ENCODE measurements at regions of chr1 and their contacts with region 1.

Region 1: GRCh38 chr1:30379684-30380624 is 343.4 kb downstream of the MATN1 start:
- DNase-seq: peak; percentile 50
- H3K4me3 ChIP-seq: no peak overlapping the region
- H3K27ac ChIP-seq: no peak overlapping the region
- H3K4me1 ChIP-seq: no peaks in the 10 kb centered on the region
- H3K27me3 ChIP-seq: no peaks in the 10 kb centered on the region
- CTCF ChIP-seq: peak; percentile 73 to 76
- POLR2A ChIP-seq: no peak

Region 2: DNA sequence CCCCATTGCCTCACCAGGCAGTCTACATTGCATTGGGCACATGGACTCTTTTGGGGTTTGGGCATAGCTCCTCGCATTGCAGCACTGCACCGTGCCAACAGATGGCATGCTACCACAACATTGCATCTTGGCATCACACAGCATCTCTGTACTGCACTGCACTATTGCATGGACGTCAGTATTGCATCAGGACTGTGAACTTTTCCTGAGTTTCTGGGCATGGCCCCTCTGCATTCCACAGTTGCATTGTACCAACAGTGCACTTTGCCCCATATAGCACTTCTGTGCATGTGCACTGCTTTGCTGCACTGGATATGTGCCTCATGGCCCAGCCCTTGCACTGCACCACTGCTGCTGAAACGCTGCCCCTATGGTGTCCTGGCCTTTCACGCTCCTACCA is 1134.1 kb before region 1 on chr1:
- CTCF ChIA-PET with region 1: interaction called, 24 read pairs
- POLR2A ChIA-PET with region 1: no interaction called
- dilution Hi-C with region 1: no loop called
- intact Hi-C with region 1: no loop called
- DNase-seq: peak; percentile 11
- H3K4me3 ChIP-seq: no peak overlapping the region
- H3K27ac ChIP-seq: no peak overlapping the region
- H3K4me1 ChIP-seq: no peaks in the 10 kb centered on the region
- H3K27me3 ChIP-seq: peaks cover 0 to 1% of the 10 kb centered on the region in 2 experiments
- CTCF ChIP-seq: peak; percentile 21 to 48
- POLR2A ChIP-seq: no peak

Region 3: GRCh38 chr1:29341936-29342335 is 1038.0 kb before region 1 on chr1:
- CTCF ChIA-PET with region 1: interaction called, 17 read pairs
- POLR2A ChIA-PET with region 1: no interaction called
- dilution Hi-C with region 1: no loop called
- intact Hi-C with region 1: loop called (anchors 1 kb)
- DNase-seq: no peak
- H3K4me3 ChIP-seq: no peak overlapping the region
- H3K27ac ChIP-seq: no peak overlapping the region
- H3K4me1 ChIP-seq: no peaks in the 10 kb centered on the region
- H3K27me3 ChIP-seq: peaks cover 0 to 2% of the 10 kb centered on the region in 2 experiments
- CTCF ChIP-seq: no peak
- POLR2A ChIP-seq: no peak

Region 4: GRCh38 chr1:29703596-29704370 is 676.2 kb before region 1 on chr1:
- CTCF ChIA-PET with region 1: interaction called, 23 read pairs
- POLR2A ChIA-PET with region 1: no interaction called
- dilution Hi-C with region 1: no loop called
- intact Hi-C with region 1: no loop called
- DNase-seq: peak; percentile 39
- H3K4me3 ChIP-seq: no peak overlapping the region
- H3K27ac ChIP-seq: no peak overlapping the region
- H3K4me1 ChIP-seq: peaks cover 11% of the 10 kb centered on the region
- H3K27me3 ChIP-seq: peaks cover 10 to 16% of the 10 kb centered on the region in 2 experiments
- CTCF ChIP-seq: peak; percentile 68 to 75
- POLR2A ChIP-seq: no peak

Region 5: DNA sequence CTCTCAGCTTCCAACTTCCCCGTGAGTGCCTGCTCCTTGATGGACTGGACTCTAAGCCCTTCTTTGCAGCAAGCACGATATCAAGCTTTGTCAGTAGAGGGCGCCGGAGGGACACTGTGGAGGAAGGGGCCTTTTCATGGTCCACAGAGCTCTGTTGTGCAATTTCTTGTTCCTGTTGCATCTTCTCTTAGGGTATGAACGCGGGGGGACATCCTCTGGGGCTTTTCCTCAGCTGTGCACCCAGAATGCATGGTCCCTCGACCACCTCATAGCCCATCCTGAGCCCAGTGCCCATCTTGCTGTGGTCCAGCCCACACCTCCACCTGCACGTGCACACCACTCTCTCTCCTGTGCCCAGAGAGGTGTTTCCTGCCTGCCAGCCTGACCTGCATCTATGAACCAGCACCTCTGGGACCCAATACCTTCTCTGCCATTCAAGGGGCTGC is 586.8 kb before region 1 on chr1:
- CTCF ChIA-PET with region 1: interaction called, 109 read pairs
- POLR2A ChIA-PET with region 1: no interaction called
- dilution Hi-C with region 1: no loop called
- intact Hi-C with region 1: loop called (anchors 1 kb)
- DNase-seq: peak; percentile 72
- H3K4me3 ChIP-seq: no peak overlapping the region
- H3K27ac ChIP-seq: no peak overlapping the region
- H3K4me1 ChIP-seq: no peaks in the 10 kb centered on the region
- H3K27me3 ChIP-seq: no peaks in the 10 kb centered on the region
- CTCF ChIP-seq: peak; percentile 75 to 87
- POLR2A ChIP-seq: no peak

Region 6: DNA sequence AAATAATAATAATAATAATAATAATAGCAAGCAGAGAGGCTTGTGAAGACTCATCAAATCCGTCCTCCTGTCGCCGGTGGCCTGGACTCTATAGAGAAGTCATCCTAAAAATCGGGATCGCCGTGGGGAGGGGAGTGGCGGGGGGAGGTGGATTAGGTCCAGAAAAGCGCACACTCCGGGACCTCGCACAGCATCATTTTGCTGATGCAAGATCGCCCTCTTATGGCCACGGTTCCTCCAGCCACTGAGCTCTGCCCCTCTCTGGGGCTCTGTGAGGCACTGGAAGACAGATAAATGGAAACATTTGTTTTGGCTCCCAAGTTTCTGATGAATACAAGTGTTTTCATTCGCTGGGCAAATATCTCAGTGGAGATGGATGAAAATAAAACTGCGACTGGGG is 268.5 kb before region 1 on chr1:
- CTCF ChIA-PET with region 1: interaction called, 5 read pairs
- POLR2A ChIA-PET with region 1: no interaction called
- dilution Hi-C with region 1: no loop called
- intact Hi-C with region 1: loop called (anchors 5 kb)
- DNase-seq: peak; percentile 18
- H3K4me3 ChIP-seq: no peak overlapping the region
- H3K27ac ChIP-seq: no peak overlapping the region
- H3K4me1 ChIP-seq: no peaks in the 10 kb centered on the region
- H3K27me3 ChIP-seq: peaks cover 0 to 1% of the 10 kb centered on the region in 2 experiments
- CTCF ChIP-seq: peak; percentile 53 to 56
- POLR2A ChIP-seq: no peak

Region 7: GRCh38 chr1:30707412-30708360 is 327.7 kb after region 1 on chr1:
- CTCF ChIA-PET with region 1: interaction called, 16 read pairs
- POLR2A ChIA-PET with region 1: no interaction called
- dilution Hi-C with region 1: no loop called
- intact Hi-C with region 1: loop called (anchors 1 kb)
- DNase-seq: peak; percentile 50
- H3K4me3 ChIP-seq: no peak overlapping the region
- H3K27ac ChIP-seq: no peak overlapping the region
- H3K4me1 ChIP-seq: no peaks in the 10 kb centered on the region
- H3K27me3 ChIP-seq: peaks cover 0 to 3% of the 10 kb centered on the region in 2 experiments
- CTCF ChIP-seq: peak; percentile 84 to 88
- POLR2A ChIP-seq: no peak

Measured in endothelial cell of umbilical vein (primary cell).